ENCODE measurements at regions of chr5 and their contacts with region 1.

Region 1: GRCh38 chr5:127746756-127747155 is 43.6 kb downstream of the CCDC192 start:
- DNase-seq: peak in 2 of 9 experiments; percentile 16 to 28
- ATAC-seq: no peak
- H3K4me3 ChIP-seq: no peak overlapping the region
- H3K4me3 Mint-ChIP-seq: no peak overlapping the region
- H3K27ac ChIP-seq: no peak overlapping the region
- H3K27ac Mint-ChIP-seq: no peak overlapping the region
- H3K4me1 ChIP-seq: no peaks in the 10 kb centered on the region
- H3K4me1 Mint-ChIP-seq: no peaks in the 10 kb centered on the region
- H3K27me3 ChIP-seq: no peaks in the 10 kb centered on the region
- H3K27me3 Mint-ChIP-seq: peaks cover 2% of the 10 kb centered on the region
- CTCF ChIP-seq: no peak

Region 2: GRCh38 chr5:127660047-127660733 is 86.6 kb before region 1 on chr5:
- CTCF ChIA-PET with region 1: no interaction called
- POLR2A ChIA-PET with region 1: no interaction called
- intact Hi-C with region 1: no loop called
- DNase-seq: no peak
- ATAC-seq: no peak
- H3K4me3 ChIP-seq: no peak overlapping the region
- H3K4me3 Mint-ChIP-seq: no peak overlapping the region
- H3K27ac ChIP-seq: no peak overlapping the region
- H3K27ac Mint-ChIP-seq: no peak overlapping the region
- H3K4me1 ChIP-seq: no peaks in the 10 kb centered on the region
- H3K4me1 Mint-ChIP-seq: no peaks in the 10 kb centered on the region
- H3K27me3 ChIP-seq: no peaks in the 10 kb centered on the region
- H3K27me3 Mint-ChIP-seq: peaks cover 3% of the 10 kb centered on the region
- CTCF ChIP-seq: no peak

Region 3: GRCh38 chr5:128674825-128675446 is 928.2 kb after region 1 on chr5:
- CTCF ChIA-PET with region 1: no interaction called
- POLR2A ChIA-PET with region 1: no interaction called
- intact Hi-C with region 1: loop called (anchors 5 kb)
- DNase-seq: peak in 3 of 9 experiments; percentile 7 to 28 (median 18)
- ATAC-seq: no peak
- H3K4me3 ChIP-seq: no peak overlapping the region
- H3K4me3 Mint-ChIP-seq: no peak overlapping the region
- H3K27ac ChIP-seq: no peak overlapping the region
- H3K27ac Mint-ChIP-seq: no peak overlapping the region
- H3K4me1 ChIP-seq: no peaks in the 10 kb centered on the region
- H3K4me1 Mint-ChIP-seq: no peaks in the 10 kb centered on the region
- H3K27me3 ChIP-seq: no peaks in the 10 kb centered on the region
- H3K27me3 Mint-ChIP-seq: no peaks in the 10 kb centered on the region
- CTCF ChIP-seq: peak; percentile 53

Measured in CD8-positive, alpha-beta T cell (primary cell).